OCI-LY7 (cell line): ENCODE measurements at regions of chr2 and their contacts with region 1.

Region 1: DNA sequence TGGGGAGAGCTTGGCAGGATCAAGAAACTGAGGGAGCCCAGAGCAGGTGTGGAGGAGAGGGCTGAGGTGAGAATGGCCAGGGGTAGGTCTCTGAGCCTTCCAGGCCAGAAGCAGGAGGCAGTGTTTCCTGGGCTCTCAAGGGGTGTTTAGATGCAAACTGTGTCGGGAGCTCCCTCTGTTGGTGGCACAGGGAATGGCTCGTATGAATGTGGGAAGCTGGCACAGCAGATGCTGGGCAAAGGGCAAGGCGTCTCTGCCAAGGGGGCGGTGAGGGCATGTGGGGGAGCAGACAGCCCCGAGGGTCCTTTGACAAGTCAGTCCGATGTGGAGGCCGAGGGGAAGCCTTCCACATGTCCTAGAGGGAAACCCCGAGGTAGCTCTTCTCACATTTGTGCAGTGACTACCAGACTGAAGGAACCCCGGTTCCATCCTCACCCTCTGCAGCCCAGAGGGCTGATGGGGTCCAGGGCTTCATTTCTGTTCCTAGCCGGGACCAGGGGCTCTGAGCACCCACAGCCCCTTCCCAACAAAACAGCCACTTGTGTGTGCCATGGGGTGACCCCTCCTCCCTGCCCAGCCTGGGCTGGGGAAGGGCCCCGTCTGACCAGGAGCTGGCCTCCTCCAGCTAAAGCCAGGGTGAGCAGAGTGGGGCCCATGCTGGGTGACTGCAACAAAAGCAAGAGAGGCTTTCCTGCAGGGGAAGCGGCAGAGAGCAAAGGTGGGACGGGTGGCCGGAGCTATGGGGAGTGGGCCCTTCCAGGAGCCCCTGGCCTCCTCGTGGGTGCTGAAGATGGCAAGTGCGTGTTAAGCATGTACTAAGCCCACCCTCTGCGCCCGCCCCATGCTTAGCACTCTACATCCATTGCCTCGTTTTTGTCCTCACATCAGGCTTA is 103.4 kb downstream of the SEPTIN10 start:
- DNase-seq: peak; percentile 60
- H3K4me3 ChIP-seq: no peak overlapping the region
- H3K27ac ChIP-seq: no peak overlapping the region
- H3K4me1 ChIP-seq: no peaks in the 10 kb centered on the region
- CTCF ChIP-seq: peak; percentile 82

Region 2: GRCh38 chr2:109448946-109449788 is 61.2 kb before region 1 on chr2:
- CTCF ChIA-PET with region 1: no interaction called
- POLR2A ChIA-PET with region 1: no interaction called
- intact Hi-C with region 1: loop called (anchors 1 kb)
- DNase-seq: no peak
- H3K4me3 ChIP-seq: no peak overlapping the region
- H3K27ac ChIP-seq: no peak overlapping the region
- H3K4me1 ChIP-seq: no peaks in the 10 kb centered on the region
- CTCF ChIP-seq: no peak

Region 3: GRCh38 chr2:109486711-109487535 is 23.5 kb before region 1 on chr2:
- CTCF ChIA-PET with region 1: no interaction called
- POLR2A ChIA-PET with region 1: no interaction called
- intact Hi-C with region 1: no loop called
- DNase-seq: no peak
- H3K4me3 ChIP-seq: no peak overlapping the region
- H3K27ac ChIP-seq: no peak overlapping the region
- H3K4me1 ChIP-seq: no peaks in the 10 kb centered on the region
- CTCF ChIP-seq: no peak

Region 4: DNA sequence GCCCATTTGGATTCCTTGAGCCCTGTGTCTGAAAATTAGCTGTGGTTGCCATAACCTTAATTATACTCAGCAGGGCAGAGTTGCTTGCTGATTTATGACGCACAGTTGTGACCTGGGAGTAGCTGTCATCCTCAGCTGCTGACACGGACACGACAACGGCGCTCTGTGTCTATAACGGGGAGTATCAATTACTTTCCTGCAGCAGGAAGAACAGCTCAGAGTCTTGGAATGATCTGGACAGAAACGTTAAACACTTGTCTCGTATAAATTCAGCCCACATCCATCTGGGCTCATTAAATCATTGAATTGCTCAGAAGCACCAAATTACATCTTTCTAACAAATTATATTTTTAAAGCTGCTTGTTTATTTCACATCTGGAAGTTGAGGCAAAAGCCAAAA is 12.9 kb before region 1 on chr2:
- CTCF ChIA-PET with region 1: no interaction called
- POLR2A ChIA-PET with region 1: no interaction called
- intact Hi-C with region 1: no loop called
- DNase-seq: no peak
- H3K4me3 ChIP-seq: no peak overlapping the region
- H3K27ac ChIP-seq: no peak overlapping the region
- H3K4me1 ChIP-seq: no peaks in the 10 kb centered on the region
- CTCF ChIP-seq: no peak